ENCODE measurements at regions of chr17 and their contacts with region 1.

Region 1: DNA sequence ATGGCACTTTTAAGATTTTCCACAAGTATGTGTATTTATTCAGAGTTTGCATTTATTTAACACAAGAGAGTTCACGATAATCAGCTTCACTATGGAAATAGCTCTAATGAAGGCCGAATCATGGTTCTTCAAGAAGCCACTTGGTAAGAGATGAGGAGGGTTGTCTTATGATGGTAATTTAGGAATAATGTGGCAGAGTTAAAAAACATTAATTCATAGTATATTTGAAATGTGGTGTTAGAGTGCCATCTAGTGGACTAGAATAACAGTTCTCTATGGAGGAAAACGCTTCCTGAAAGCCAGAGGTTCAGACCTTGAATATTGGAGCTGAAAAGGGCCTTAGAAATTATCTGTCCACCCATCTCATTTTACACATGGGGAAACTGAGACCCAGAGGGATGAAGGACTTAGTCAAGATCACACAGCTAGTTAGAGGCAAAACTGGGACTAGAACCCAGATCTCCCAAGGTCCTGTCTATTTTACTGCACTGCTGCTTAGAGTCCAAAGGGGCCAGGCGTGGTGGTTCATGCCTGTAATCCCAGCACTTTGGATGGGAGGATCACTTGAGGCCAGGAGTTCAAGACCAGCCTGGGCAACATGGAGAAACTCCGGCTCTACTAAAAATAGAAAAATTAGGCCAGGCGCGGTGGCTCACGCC is 33.8 kb upstream of the KPNB1 start:
- DNase-seq: no peak
- ATAC-seq: peak; percentile 42
- H3K4me3 Mint-ChIP-seq: no peak overlapping the region
- H3K27ac Mint-ChIP-seq: no peak overlapping the region
- H3K4me1 Mint-ChIP-seq: peaks cover 11% of the 10 kb centered on the region
- H3K27me3 Mint-ChIP-seq: no peaks in the 10 kb centered on the region

Region 2: GRCh38 chr17:47363171-47363570 is 252.7 kb before region 1 on chr17:
- CTCF ChIA-PET with region 1: interaction called, 18 read pairs
- POLR2A ChIA-PET with region 1: no interaction called
- DNase-seq: no peak
- ATAC-seq: no peak
- H3K4me3 Mint-ChIP-seq: no peak overlapping the region
- H3K27ac Mint-ChIP-seq: no peak overlapping the region
- H3K4me1 Mint-ChIP-seq: no peaks in the 10 kb centered on the region
- H3K27me3 Mint-ChIP-seq: peaks cover 5% of the 10 kb centered on the region

Region 3: DNA sequence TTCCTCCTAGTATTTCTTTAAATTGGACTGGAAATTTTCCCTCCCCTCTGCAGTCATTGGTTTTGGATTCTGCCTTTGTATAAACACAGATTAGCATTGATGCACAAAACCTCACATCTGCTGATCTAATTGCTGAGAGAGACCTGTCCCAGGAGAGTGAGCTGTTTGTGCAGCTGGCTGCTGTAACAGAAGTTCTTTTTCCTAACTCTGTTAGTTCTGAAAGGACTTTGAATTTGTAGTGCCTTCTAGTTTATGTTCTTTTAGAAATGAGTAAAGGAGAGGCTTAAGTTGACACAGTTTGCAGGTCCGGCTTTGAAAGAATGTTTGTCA is 11.3 kb before region 1 on chr17:
- CTCF ChIA-PET with region 1: interaction called, 35 read pairs
- POLR2A ChIA-PET with region 1: no interaction called
- DNase-seq: no peak
- ATAC-seq: no peak
- H3K4me3 Mint-ChIP-seq: no peak overlapping the region
- H3K27ac Mint-ChIP-seq: no peak overlapping the region
- H3K4me1 Mint-ChIP-seq: no peaks in the 10 kb centered on the region
- H3K27me3 Mint-ChIP-seq: no peaks in the 10 kb centered on the region

Region 4: DNA sequence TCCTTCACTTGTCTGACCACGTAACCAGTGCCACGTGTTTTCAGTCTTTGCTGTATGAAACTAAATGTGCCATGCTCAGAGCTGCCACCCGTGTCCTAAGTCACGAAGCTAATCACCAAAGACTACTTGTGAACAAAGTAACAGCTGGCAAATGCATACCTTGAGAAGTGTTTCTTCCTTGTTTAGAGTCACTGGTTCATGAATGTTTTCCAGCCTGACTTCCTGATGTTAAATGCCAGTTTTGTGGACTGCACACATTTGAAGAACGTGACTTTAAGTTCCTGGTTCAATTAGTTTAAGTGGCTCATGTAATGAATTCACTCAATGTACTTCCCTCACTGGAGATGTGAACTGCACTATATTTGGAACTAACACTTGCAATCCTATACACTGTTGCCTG is 13.9 kb after region 1 on chr17:
- CTCF ChIA-PET with region 1: interaction called, 23 read pairs
- POLR2A ChIA-PET with region 1: no interaction called
- DNase-seq: no peak
- ATAC-seq: no peak
- H3K4me3 Mint-ChIP-seq: no peak overlapping the region
- H3K27ac Mint-ChIP-seq: no peak overlapping the region
- H3K4me1 Mint-ChIP-seq: peaks cover 10% of the 10 kb centered on the region
- H3K27me3 Mint-ChIP-seq: no peaks in the 10 kb centered on the region

Region 5: GRCh38 chr17:47649153-47649971 is 33.5 kb after region 1 on chr17 and contains the start of gene KPNB1:
- CTCF ChIA-PET with region 1: interaction called, 14 read pairs
- POLR2A ChIA-PET with region 1: interaction called, 8 read pairs
- DNase-seq: peak; percentile 99
- ATAC-seq: peak; percentile 89
- H3K4me3 Mint-ChIP-seq: peak within 1 kb of the TSS; percentile 97
- H3K27ac Mint-ChIP-seq: peak within 1 kb of the TSS; percentile 100
- H3K4me1 Mint-ChIP-seq: peaks cover 41% of the 10 kb centered on the region
- H3K27me3 Mint-ChIP-seq: no peaks in the 10 kb centered on the region
- total RNA-seq, gene KPNB1: 413 to 427 TPM

Region 6: GRCh38 chr17:47670081-47670480 is 54.2 kb after region 1 on chr17:
- CTCF ChIA-PET with region 1: no interaction called
- POLR2A ChIA-PET with region 1: no interaction called
- DNase-seq: no peak
- ATAC-seq: peak; percentile 47
- H3K4me3 Mint-ChIP-seq: no peak overlapping the region
- H3K27ac Mint-ChIP-seq: peak overlapping the region; percentile 70
- H3K4me1 Mint-ChIP-seq: peaks cover 40% of the 10 kb centered on the region
- H3K27me3 Mint-ChIP-seq: no peaks in the 10 kb centered on the region